ENCODE measurements at regions of chr10 and their contacts with region 1.

Region 1: GRCh38 chr10:103888113-103888841 is 29.7 kb downstream of the STN1 start:
- DNase-seq: peak; percentile 79
- H3K4me3 ChIP-seq: no peak overlapping the region
- H3K27ac ChIP-seq: peak overlapping the region; percentile 68
- H3K4me1 ChIP-seq: peaks cover 59% of the 10 kb centered on the region
- H3K27me3 ChIP-seq: no peaks in the 10 kb centered on the region
- CTCF ChIP-seq: peak; percentile 78 to 94

Region 2: DNA sequence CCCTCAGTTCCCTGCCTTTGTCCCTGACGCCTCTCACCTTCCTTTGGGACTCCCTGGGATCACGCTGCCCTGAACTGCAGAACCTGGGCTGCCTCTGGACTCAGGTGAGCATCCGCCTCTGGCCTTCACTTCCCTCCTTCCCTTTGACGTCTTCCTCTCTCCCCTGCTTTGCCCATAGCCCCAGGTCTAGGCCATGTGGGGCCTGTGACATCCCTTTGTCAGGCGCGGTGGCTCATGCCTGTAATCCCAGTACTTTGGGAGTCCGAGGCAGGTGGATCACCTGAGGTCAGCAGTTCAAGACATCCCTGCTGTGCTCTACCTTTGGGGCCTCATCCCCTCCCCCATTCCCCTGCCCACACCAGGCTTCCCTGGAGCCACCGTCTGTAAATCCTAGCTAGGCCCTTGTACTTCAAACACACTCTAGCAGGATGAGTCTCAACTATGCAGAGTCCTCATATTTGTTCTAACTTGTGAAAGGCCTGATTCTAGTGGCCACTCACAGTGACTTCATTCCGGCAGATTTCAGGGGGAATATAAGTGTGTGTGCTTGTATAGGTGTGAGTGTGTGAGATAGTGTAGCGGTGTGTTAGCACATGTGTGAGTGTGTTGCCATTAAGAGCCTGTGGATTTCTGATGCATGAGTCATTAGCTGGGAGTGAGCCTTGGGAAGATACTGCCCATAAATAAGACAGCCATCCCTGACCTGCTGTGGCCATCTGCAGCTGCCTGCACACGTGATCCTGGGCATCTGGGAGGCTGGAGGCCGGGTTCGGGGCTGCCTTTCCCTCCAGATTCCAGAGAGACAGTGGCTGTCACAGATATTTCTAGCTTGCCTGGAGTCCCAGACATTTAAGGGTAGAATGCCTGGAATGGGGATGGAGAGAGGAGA is 396.5 kb before region 1 on chr10:
- CTCF ChIA-PET with region 1: no interaction called
- dilution Hi-C with region 1: no loop called
- in situ Hi-C with region 1: no loop called
- intact Hi-C with region 1: loop called (anchors 5 kb)
- DNase-seq: peak; percentile 84
- H3K4me3 ChIP-seq: no peak overlapping the region
- H3K27ac ChIP-seq: peak overlapping the region; percentile 40
- H3K4me1 ChIP-seq: peaks cover 40% of the 10 kb centered on the region
- H3K27me3 ChIP-seq: no peaks in the 10 kb centered on the region
- CTCF ChIP-seq: no peak

Region 3: GRCh38 chr10:103752680-103753248 is 135.5 kb before region 1 on chr10:
- CTCF ChIA-PET with region 1: no interaction called
- dilution Hi-C with region 1: no loop called
- in situ Hi-C with region 1: no loop called
- intact Hi-C with region 1: no loop called
- DNase-seq: no peak
- H3K4me3 ChIP-seq: no peak overlapping the region
- H3K27ac ChIP-seq: no peak overlapping the region
- H3K4me1 ChIP-seq: peaks cover 41% of the 10 kb centered on the region
- H3K27me3 ChIP-seq: no peaks in the 10 kb centered on the region
- CTCF ChIP-seq: peak; percentile 78 to 91

Region 4: DNA sequence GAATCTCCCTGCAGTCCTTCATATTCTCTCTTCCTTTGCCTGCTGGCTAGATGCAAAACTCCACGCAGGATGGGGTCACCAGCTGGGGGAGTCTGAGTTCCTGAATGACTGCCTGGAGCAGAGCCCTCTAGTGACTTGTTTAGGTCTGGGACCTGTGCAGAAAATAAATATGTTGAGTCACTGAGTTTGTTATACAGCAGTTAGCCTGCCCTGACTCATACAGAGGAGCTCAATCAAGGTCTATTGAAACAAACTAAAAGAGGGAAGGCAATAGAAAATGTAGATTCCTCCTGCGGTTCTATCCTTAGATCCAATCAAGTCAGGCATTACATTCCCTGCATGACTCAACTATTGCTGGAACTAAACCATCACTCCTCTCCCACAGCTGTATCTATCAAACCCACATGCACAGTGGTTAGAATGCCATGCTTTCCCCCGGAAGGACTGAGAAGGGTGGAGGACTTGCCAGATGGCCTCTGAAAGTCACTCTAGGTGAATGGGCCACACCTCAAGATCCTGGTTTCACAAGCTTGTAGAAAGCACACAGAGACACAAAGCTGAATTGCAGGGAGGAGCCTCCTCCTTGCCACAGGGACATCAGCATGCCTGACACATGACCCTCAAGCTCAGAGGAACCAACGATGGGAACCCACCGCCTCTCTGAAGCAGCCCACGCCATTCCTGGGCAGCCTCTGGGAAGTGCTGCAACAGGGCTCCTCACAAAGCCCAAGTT is 106.8 kb before region 1 on chr10:
- CTCF ChIA-PET with region 1: no interaction called
- dilution Hi-C with region 1: no loop called
- in situ Hi-C with region 1: no loop called
- intact Hi-C with region 1: loop called (anchors 5 kb)
- DNase-seq: peak; percentile 99
- H3K4me3 ChIP-seq: no peak overlapping the region
- H3K27ac ChIP-seq: peak overlapping the region; percentile 90
- H3K4me1 ChIP-seq: peaks cover 77% of the 10 kb centered on the region
- H3K27me3 ChIP-seq: no peaks in the 10 kb centered on the region
- CTCF ChIP-seq: peak; percentile 66 to 68

Region 5: GRCh38 chr10:103791848-103792247 is 96.4 kb before region 1 on chr10:
- CTCF ChIA-PET with region 1: no interaction called
- dilution Hi-C with region 1: no loop called
- in situ Hi-C with region 1: no loop called
- intact Hi-C with region 1: no loop called
- DNase-seq: no peak
- H3K4me3 ChIP-seq: no peak overlapping the region
- H3K27ac ChIP-seq: peak overlapping the region; percentile 19
- H3K4me1 ChIP-seq: peaks cover 49% of the 10 kb centered on the region
- H3K27me3 ChIP-seq: no peaks in the 10 kb centered on the region
- CTCF ChIP-seq: no peak

Region 6: GRCh38 chr10:103859161-103860086 is 28.9 kb before region 1 on chr10:
- CTCF ChIA-PET with region 1: interaction called, 5 read pairs
- dilution Hi-C with region 1: no loop called
- in situ Hi-C with region 1: no loop called
- intact Hi-C with region 1: loop called (anchors 1 kb)
- DNase-seq: peak; percentile 69
- H3K4me3 ChIP-seq: no peak overlapping the region
- H3K27ac ChIP-seq: peak overlapping the region; percentile 22
- H3K4me1 ChIP-seq: peaks cover 45% of the 10 kb centered on the region
- H3K27me3 ChIP-seq: no peaks in the 10 kb centered on the region
- CTCF ChIP-seq: peak; percentile 64 to 69

Region 7: DNA sequence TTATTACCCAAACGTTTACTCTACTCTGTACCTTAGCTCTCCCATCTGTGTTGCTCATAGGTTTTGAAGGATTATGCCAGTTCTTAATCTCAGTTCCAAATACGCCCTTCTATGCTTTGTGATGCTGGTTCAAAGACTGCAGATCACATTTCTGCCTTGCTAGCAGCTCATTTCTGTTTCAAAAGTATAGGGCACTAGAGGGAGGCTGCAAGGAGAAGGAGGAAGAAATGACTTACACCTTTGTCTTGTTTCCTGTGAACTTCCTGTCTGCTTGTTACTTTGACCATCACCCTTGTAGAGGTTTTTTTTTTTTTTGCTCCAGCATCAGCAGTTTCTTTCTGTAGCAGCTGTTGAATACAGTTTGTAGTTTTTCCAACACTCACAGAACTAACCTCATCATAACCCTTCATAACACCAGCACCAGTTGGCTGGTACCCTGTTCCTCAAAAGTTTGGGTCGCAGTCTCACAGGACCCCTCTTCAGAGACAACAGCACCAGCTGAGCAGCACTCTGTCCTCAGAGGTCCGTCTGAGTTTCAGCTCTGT is 95.2 kb after region 1 on chr10:
- CTCF ChIA-PET with region 1: no interaction called
- dilution Hi-C with region 1: loop called (anchors 5 kb)
- in situ Hi-C with region 1: no loop called
- intact Hi-C with region 1: no loop called
- DNase-seq: no peak
- H3K4me3 ChIP-seq: no peak overlapping the region
- H3K27ac ChIP-seq: no peak overlapping the region
- H3K4me1 ChIP-seq: peaks cover 16% of the 10 kb centered on the region
- H3K27me3 ChIP-seq: no peaks in the 10 kb centered on the region
- CTCF ChIP-seq: no peak

Region 8: GRCh38 chr10:104028146-104028545 is 139.9 kb after region 1 on chr10:
- CTCF ChIA-PET with region 1: interaction called, 3 read pairs
- dilution Hi-C with region 1: no loop called
- in situ Hi-C with region 1: no loop called
- intact Hi-C with region 1: loop called (anchors 1 kb)
- DNase-seq: peak; percentile 46
- H3K4me3 ChIP-seq: no peak overlapping the region
- H3K27ac ChIP-seq: no peak overlapping the region
- H3K4me1 ChIP-seq: no peaks in the 10 kb centered on the region
- H3K27me3 ChIP-seq: no peaks in the 10 kb centered on the region
- CTCF ChIP-seq: peak; percentile 50 to 52

Region 9: DNA sequence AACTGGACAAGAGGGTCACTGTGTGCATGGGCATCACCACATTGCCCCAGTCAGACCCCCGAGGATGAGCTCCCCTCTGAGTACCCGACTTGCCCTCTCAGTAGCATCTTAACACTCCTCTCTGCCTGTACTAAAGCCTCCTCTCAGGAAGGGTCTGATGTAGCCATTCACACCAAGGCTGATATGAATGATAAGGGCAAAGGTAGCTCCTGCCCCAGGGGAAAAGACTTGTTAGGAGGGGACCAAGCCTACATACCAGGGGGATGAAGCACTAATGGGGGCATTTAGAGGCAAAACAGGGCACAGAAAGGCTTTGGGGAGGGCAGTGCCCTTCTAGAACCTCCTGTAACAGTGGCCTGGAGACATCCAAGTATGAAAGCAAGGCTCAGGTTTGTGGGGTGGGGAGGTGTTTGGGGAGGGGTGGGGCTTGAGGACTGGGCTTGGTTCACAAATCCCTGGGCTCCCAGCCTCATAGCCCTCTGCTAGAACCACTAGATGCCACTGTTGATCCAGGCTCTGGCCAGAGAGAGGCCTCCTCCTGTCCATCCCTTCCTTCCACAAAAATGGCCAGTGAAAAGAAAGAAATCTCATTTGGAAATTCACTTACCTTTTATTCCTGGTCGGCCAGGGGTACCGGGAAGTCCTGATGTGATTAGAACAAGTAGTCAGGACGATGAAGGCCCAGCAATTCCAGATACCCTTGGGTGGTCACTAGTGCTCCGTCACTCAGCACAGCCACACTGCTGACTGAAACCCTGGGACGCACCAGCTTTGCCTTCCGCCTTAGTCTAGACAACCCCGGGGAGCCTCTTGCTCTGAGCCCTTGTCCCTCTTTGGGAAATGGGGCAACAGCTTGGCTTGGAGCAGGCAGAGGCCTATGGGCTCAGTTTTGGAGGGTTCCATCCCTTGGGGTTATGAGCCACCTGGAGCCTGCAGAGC is 157.1 kb after region 1 on chr10:
- CTCF ChIA-PET with region 1: no interaction called
- dilution Hi-C with region 1: no loop called
- in situ Hi-C with region 1: no loop called
- intact Hi-C with region 1: no loop called
- DNase-seq: no peak
- H3K4me3 ChIP-seq: no peak overlapping the region
- H3K27ac ChIP-seq: no peak overlapping the region
- H3K4me1 ChIP-seq: peaks cover 13% of the 10 kb centered on the region
- H3K27me3 ChIP-seq: no peaks in the 10 kb centered on the region
- CTCF ChIP-seq: peak in 1 of 2 donors; percentile 22

Region 10: GRCh38 chr10:104209575-104210198 is 321.4 kb after region 1 on chr10:
- CTCF ChIA-PET with region 1: no interaction called
- dilution Hi-C with region 1: no loop called
- in situ Hi-C with region 1: loop called in 1 of 2 experiments (anchors 25 kb)
- intact Hi-C with region 1: loop called (anchors 1 kb)
- DNase-seq: peak; percentile 21
- H3K4me3 ChIP-seq: no peak overlapping the region
- H3K27ac ChIP-seq: no peak overlapping the region
- H3K4me1 ChIP-seq: no peaks in the 10 kb centered on the region
- H3K27me3 ChIP-seq: no peaks in the 10 kb centered on the region
- CTCF ChIP-seq: peak; percentile 54 to 75